Ovary (tissue), 10 donors: ENCODE measurements at regions of chr13 and their contacts with region 1.

Region 1: DNA sequence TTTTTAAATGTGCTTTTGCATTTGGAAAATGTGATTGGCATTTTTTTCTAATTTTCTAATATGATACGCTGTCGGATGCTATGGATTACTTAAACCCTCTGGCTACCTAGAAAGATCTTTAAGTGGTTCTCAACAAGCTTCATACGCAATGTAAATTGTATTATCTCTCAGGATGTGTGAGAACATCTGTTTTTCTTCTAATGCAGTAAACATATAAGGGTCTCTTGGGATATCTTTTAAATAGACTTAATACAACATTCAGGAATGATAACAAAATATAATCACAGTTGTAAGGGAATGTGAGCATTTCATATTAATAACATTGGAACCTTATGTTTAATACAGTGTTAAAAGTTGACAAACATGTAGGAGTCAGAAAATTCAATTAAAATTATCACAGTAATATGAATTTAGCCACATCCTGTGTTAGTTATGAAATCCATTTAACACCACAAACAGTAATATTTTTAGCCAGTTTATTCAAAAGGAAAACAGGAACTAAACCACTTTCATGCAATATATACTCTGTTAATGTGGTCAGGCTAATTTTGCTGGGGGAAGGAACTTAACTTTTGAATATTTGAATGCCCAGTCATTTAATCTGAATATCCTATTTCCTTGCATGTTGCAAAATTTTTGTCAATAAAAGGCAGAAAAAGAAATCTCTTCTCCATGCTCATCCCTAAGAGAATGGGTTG is 15.0 kb upstream of the ALOX5AP start:
- DNase-seq: no peak
- H3K4me3 ChIP-seq: no peak overlapping the region
- H3K27ac ChIP-seq: no peak overlapping the region
- H3K4me1 ChIP-seq: no peaks in the 10 kb centered on the region
- H3K27me3 ChIP-seq: no peaks in the 10 kb centered on the region
- CTCF ChIP-seq: no peak
- EP300 ChIP-seq: no peak
- POLR2A ChIP-seq: no peak

Region 2: DNA sequence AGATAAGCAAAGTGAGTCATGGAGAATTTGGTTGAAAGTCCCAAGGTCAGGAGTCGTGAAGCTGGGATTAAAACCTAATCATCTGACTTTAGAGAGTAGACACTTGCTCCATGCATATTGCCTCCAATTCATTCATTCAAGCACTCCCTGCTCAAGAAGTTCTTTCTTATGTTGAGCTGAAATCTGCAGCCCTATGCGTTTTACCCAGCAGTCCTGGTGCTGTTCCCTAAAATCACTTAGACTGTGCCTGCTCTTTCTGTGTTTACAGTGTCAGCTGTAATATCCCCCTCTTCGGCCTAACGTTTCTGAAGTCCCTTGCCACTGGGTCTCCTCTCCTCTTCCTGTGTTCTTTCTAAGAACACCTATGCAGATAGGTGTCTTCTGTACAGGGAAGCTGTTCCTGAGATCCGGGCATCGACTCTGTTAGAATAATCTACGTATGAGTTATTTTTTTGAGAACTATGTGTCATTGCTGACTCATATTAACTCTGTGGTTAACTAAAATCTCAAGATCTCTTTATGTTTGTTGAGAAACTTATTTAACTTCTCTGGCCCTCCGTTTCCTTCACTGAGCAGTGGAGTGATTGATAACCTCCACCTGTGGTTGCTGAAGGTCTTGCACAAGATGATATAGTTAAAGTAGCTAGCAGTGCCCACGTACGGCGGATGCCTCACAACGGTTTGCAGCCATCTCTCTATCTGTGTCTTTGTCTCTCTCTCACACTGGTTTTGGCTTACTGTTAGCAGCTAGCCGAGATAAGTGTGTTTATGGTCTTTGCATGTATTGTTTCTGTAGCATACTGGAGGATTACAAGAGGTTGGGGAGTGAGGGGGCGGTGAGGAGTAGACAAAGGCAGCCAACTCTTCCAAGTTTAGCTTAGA is 19.7 kb after region 1 on chr13:
- intact Hi-C with region 1: loop called in 1 of 4 experiments (anchors 1 kb)
- DNase-seq: no peak
- H3K4me3 ChIP-seq: no peak overlapping the region
- H3K27ac ChIP-seq: peak overlapping the region in 1 of 2 donors; percentile 28
- H3K4me1 ChIP-seq: peaks cover 12% of the 10 kb centered on the region
- H3K27me3 ChIP-seq: no peaks in the 10 kb centered on the region
- CTCF ChIP-seq: no peak
- EP300 ChIP-seq: no peak
- POLR2A ChIP-seq: no peak